ENCODE measurements at regions of chr6 and their contacts with region 1.

Region 1: DNA sequence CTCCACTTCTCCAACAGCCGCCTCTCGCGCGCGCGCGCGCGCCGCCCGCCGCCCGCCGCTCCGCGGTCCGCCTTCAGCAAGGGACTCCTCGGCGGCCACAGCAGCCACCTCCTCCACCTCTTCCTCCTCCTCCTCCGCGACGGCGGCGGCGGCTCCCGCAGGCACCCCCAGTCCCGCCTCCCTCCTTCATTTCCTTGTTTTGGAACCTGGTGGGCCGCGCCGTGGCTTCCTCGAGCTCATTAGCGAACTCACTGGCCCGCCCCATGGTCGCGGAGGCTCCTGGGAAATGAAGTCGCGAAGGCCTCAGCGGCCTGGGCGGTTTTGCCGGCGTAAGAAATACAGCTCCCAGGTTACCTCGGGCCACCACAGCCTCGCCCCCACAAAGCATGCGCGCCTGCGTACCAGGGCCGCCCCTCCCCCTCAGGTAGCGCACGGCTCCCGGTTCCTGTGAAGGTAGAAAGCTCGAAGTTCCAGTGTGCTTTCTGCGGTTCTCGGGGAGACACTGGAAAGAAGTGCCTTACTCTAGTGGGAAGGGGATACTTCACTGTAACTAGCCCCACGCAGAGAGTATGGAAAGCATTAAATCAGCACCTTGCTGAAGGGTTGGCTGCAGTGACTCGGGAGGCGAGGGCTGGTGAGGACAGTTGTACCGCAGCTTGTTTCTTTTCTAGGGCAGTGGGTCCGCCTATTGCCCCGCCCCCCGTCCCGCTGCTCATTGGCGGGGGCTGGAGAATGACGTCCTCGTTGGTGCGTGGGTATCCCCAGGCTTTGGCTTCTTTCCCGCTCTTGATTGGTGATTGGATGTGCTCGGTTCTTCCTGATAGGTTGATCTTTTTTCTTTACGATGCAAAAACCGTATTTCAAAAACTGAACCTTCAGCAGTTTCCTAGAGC is at the start of gene CDK19:
- DNase-seq: peak; percentile 97 to 100 (median 98)
- ATAC-seq: peak; percentile 82
- H3K4me3 ChIP-seq: peak within 1 kb of the TSS; percentile 88
- H3K4me3 Mint-ChIP-seq: peak within 1 kb of the TSS; percentile 99
- H3K27ac ChIP-seq: peak within 1 kb of the TSS; percentile 82 to 93
- H3K27ac Mint-ChIP-seq: peak within 1 kb of the TSS; percentile 99
- H3K4me1 ChIP-seq: peaks cover 16% of the 10 kb centered on the region
- H3K4me1 Mint-ChIP-seq: peaks cover 33% of the 10 kb centered on the region
- H3K27me3 ChIP-seq: no peaks in the 10 kb centered on the region
- H3K27me3 Mint-ChIP-seq: no peaks in the 10 kb centered on the region
- CTCF ChIP-seq: no peak
- total RNA-seq, gene CDK19: 6.4 to 8.3 TPM

Region 2: GRCh38 chr6:109482905-109483735 is 1332.3 kb before region 1 on chr6 and contains the start of gene ZBTB24:
- CTCF ChIA-PET with region 1: no interaction called
- POLR2A ChIA-PET with region 1: no interaction called
- intact Hi-C with region 1: loop called in 1 of 2 experiments (anchors 5 kb)
- DNase-seq: peak; percentile 78 to 97 (median 88)
- ATAC-seq: peak; percentile 87
- H3K4me3 ChIP-seq: peak within 1 kb of the TSS; percentile 85
- H3K4me3 Mint-ChIP-seq: peak within 1 kb of the TSS; percentile 96
- H3K27ac ChIP-seq: peak within 1 kb of the TSS; percentile 68 to 77
- H3K27ac Mint-ChIP-seq: peak within 1 kb of the TSS; percentile 79
- H3K4me1 ChIP-seq: peaks cover 36% of the 10 kb centered on the region
- H3K4me1 Mint-ChIP-seq: peaks cover 55% of the 10 kb centered on the region
- H3K27me3 ChIP-seq: no peaks in the 10 kb centered on the region
- H3K27me3 Mint-ChIP-seq: no peaks in the 10 kb centered on the region
- CTCF ChIP-seq: no peak
- total RNA-seq, gene ZBTB24: 10.4 to 10.5 TPM

Region 3: DNA sequence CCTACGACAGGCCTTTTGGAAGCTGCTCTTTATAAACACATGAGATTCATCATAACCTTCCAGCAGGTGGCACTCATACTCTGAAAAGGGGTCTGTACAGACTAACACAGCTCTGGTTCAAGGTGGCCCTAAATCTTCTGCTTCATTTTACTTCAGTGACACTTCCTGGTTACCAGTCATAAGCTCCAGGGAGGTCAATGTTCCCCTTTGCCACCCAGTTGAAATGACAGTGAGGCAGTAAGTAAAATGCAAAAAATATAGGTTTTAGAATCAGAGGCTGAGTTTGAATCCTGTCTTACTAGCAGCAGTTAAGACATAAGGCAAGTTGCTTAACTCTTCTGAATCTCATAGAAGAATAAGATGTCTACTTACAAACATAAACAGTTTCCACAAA is 133.0 kb before region 1 on chr6:
- CTCF ChIA-PET with region 1: interaction called, 3 read pairs
- POLR2A ChIA-PET with region 1: interaction called, 35 read pairs
- intact Hi-C with region 1: loop called (anchors 2 to 5 kb)
- DNase-seq: peak in 12 of 14 experiments; percentile 21 to 88 (median 60)
- ATAC-seq: peak; percentile 99
- H3K4me3 ChIP-seq: no peak overlapping the region
- H3K4me3 Mint-ChIP-seq: no peak overlapping the region
- H3K27ac ChIP-seq: no peak overlapping the region
- H3K27ac Mint-ChIP-seq: no peak overlapping the region
- H3K4me1 ChIP-seq: peaks cover 10% of the 10 kb centered on the region
- H3K4me1 Mint-ChIP-seq: peaks cover 19% of the 10 kb centered on the region
- H3K27me3 ChIP-seq: no peaks in the 10 kb centered on the region
- H3K27me3 Mint-ChIP-seq: no peaks in the 10 kb centered on the region
- CTCF ChIP-seq: peak; percentile 86

Region 4: DNA sequence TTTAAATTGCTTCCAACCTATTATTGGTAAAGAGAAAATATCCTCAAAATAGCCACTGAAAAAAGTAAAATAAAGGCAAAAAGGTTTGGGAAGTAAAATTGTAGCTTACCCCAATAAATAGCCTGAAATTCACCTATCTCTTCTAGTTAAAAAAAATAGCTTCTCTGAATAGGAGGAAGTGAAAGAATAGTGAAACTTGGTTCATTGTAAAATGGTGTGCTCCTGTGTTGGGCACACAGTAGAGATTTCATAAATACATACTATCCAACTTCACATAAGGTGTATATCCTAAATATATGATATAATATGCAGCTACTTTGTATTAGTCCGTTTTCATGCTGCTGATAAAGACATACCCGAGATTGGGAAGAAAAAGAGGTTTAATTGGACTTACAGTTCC is 45.5 kb before region 1 on chr6:
- CTCF ChIA-PET with region 1: no interaction called
- POLR2A ChIA-PET with region 1: no interaction called
- intact Hi-C with region 1: no loop called
- DNase-seq: no peak
- ATAC-seq: no peak
- H3K4me3 ChIP-seq: no peak overlapping the region
- H3K4me3 Mint-ChIP-seq: no peak overlapping the region
- H3K27ac ChIP-seq: no peak overlapping the region
- H3K27ac Mint-ChIP-seq: no peak overlapping the region
- H3K4me1 ChIP-seq: no peaks in the 10 kb centered on the region
- H3K4me1 Mint-ChIP-seq: peaks cover 4% of the 10 kb centered on the region
- H3K27me3 ChIP-seq: no peaks in the 10 kb centered on the region
- H3K27me3 Mint-ChIP-seq: no peaks in the 10 kb centered on the region
- CTCF ChIP-seq: no peak

Region 5: GRCh38 chr6:110873981-110874879 is 58.8 kb after region 1 on chr6 and contains the start of gene AMD1:
- CTCF ChIA-PET with region 1: interaction called, 16 read pairs
- POLR2A ChIA-PET with region 1: interaction called, 809 read pairs
- intact Hi-C with region 1: loop called (anchors 1 to 2 kb)
- DNase-seq: peak; percentile 91 to 98 (median 94)
- ATAC-seq: peak; percentile 75
- H3K4me3 ChIP-seq: peak within 1 kb of the TSS; percentile 78
- H3K4me3 Mint-ChIP-seq: peak within 1 kb of the TSS; percentile 96
- H3K27ac ChIP-seq: peak within 1 kb of the TSS; percentile 82 to 91
- H3K27ac Mint-ChIP-seq: peak within 1 kb of the TSS; percentile 99
- H3K4me1 ChIP-seq: peaks cover 17% of the 10 kb centered on the region
- H3K4me1 Mint-ChIP-seq: peaks cover 37% of the 10 kb centered on the region
- H3K27me3 ChIP-seq: no peaks in the 10 kb centered on the region
- H3K27me3 Mint-ChIP-seq: no peaks in the 10 kb centered on the region
- CTCF ChIP-seq: no peak
- total RNA-seq, gene AMD1: 165 to 174 TPM

Region 6: DNA sequence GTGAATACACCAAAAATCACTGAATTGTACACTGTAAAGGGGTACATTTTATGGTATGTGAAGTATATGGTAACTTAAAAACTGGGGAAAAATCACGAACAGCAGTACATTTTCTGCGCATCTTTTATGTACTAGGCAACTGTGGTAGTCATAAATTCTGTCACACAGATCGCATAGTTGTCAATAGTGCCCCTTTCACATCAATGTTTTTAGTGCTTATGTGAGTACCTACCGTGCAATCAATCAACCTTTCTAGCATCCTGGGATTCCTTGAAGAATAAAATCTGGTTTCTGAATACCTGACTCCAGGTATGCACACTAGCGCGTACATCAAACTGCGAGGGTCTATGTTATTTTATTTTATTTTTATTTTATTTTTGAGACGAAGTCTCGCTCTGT is 165.7 kb after region 1 on chr6:
- CTCF ChIA-PET with region 1: no interaction called
- POLR2A ChIA-PET with region 1: interaction called, 26 read pairs
- intact Hi-C with region 1: loop called (anchors 2 to 5 kb)
- DNase-seq: peak in 1 of 14 experiments; percentile 43
- ATAC-seq: peak; percentile 1
- H3K4me3 ChIP-seq: peak overlapping the region; percentile 99
- H3K4me3 Mint-ChIP-seq: peak overlapping the region; percentile 99
- H3K27ac ChIP-seq: peak overlapping the region; percentile 77 to 97
- H3K27ac Mint-ChIP-seq: peak overlapping the region; percentile 99
- H3K4me1 ChIP-seq: peaks cover 14% of the 10 kb centered on the region
- H3K4me1 Mint-ChIP-seq: peaks cover 49% of the 10 kb centered on the region
- H3K27me3 ChIP-seq: no peaks in the 10 kb centered on the region
- H3K27me3 Mint-ChIP-seq: no peaks in the 10 kb centered on the region
- CTCF ChIP-seq: no peak

Region 7: DNA sequence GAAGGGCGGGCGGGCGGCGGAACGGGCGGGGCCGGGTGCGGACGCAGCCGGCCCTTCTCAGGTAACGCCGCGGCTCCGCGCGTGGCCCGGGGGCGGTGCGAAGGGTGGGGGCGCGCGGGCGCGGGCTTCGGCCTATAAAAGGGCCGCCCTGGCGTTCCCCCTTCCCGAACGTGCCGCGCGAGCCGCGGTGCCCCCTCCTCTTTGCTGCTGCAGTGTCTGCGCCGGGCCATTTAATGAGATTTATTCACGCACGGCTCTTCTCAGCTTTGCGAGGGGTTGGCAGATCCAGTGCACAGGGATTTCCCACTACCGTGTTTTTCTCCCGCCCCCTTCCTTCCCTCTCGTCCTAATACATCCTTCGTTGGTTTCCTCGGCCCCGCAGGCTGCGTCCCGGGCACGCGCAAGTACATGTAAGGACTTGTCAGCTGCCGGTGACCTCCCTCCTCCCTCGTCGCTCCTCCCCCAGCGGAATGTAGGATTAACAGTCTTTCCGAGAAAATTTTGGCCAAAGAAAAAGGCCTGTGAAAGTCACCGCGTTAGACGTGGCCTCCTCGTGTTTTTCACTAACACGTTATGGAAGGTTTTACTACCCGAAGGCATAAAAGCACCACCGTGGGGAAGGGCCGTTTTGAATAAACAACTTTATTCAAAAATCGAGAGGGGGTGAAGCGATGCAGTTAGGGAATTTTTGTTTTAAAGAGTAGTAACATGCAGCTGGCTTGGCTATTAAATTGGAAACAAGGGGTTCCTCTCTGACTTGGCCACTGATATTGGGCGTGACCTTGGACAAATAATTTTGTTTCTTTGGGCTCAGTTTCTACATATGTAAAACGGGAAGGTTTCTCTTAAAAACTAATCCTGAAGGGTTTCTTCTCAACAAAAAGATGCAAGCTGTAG is 668.5 kb after region 1 on chr6:
- CTCF ChIA-PET with region 1: no interaction called
- POLR2A ChIA-PET with region 1: interaction called, 7 read pairs
- intact Hi-C with region 1: loop called (anchors 5 to 10 kb)
- DNase-seq: peak in 9 of 14 experiments; percentile 51 to 95 (median 83)
- ATAC-seq: peak; percentile 55
- H3K4me3 ChIP-seq: peak overlapping the region; percentile 69
- H3K4me3 Mint-ChIP-seq: peak overlapping the region; percentile 99
- H3K27ac ChIP-seq: peak overlapping the region; percentile 97 to 98
- H3K27ac Mint-ChIP-seq: peak overlapping the region; percentile 98
- H3K4me1 ChIP-seq: peaks cover 30% of the 10 kb centered on the region
- H3K4me1 Mint-ChIP-seq: peaks cover 60% of the 10 kb centered on the region
- H3K27me3 ChIP-seq: no peaks in the 10 kb centered on the region
- H3K27me3 Mint-ChIP-seq: no peaks in the 10 kb centered on the region
- CTCF ChIP-seq: no peak

Measured in CD4-positive, alpha-beta T cell (primary cell).